Esophagus squamous epithelium (tissue), 5 donors: ENCODE measurements at regions of chr20 and their contacts with region 1.

Region 1: DNA sequence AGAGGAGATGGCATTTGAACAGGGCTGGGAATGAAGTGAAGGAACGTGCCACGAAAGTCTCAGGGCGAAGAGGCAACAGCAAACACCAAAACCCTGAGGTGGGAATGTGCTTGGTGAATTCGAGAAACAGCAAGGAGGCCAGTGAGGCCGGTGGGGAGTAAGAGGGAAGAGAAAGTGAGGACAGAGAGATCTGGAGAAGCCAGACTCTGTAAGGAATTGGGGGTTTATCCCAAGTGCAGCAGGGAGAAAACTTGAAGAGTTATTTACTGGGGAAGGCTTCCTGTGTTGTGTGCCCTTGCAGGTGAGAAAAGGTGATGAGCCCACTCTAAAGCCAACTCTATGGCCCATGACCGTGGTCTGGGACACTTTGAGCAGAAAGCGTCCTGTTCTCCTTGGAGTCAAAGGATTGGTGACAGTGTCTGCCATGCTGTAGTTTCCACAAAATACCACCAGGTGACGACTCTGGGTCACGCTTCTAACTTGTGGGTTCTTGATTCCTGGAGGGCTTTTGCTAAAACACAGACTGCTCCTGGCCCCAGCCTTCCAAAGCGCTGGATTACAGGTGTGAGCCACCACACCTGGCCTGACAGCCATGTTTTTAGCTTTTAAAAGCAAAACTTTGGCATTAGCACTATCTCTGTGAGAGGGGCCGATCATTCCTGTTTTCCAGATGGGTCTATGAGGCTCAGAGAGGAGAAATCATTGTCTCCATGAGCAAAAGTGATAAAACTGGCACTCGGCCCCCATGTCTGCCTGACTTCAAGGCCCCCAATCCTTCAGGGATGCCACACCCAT is 18.0 kb upstream of the CSNK2A1 start:
- DNase-seq: no peak
- H3K4me3 ChIP-seq: no peak overlapping the region
- H3K27ac ChIP-seq: no peak overlapping the region
- H3K4me1 ChIP-seq: peaks cover 0 to 6% (median 0%) of the 10 kb centered on the region in 3 donors
- H3K27me3 ChIP-seq: peaks cover 0 to 74% (median 0%) of the 10 kb centered on the region in 4 donors
- CTCF ChIP-seq: peak; percentile 63 to 96 (median 94)
- POLR2A ChIP-seq: no peak

Region 2: DNA sequence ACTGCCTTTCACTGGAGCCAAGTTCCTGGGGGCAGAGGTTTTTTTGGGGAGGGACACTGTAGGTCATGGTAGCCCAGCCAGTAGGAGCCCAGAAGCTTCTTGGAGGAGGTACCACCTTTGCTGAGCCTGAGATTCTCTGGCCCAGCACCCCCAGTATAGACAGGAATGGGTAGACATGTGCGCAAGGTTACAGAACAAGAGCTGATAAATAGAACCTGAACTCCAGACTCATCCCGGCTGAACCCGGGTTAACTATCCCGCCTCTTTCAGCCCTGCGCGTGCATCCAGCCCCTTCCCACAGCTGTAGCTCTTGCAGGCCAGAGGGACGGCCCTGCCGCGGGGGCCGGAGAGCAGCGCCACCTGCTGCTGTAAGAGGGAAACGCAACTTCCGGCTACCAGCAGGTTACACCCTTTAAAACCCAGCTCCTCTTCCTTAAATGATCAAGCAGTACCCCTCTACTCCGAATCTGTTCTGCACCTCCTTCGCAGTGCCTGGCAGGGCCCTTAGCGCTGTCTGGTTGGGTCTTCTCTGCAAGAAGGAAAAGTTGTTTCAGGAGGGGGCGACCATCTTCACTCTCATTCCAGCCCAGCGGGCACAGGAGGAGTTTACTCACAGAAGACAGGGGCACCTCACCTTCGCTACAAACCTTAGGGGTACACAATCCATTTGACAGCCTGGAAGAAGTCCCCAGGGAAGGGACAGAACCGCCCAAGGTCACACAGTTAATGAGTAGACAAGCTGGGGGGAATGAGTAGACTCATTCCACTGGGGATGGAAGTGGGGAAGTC is 83.9 kb after region 1 on chr20:
- intact Hi-C with region 1: loop called (anchors 2 kb)
- DNase-seq: no peak
- H3K4me3 ChIP-seq: no peak overlapping the region
- H3K27ac ChIP-seq: no peak overlapping the region
- H3K4me1 ChIP-seq: peaks cover 6 to 21% (median 7%) of the 10 kb centered on the region in 3 donors
- H3K27me3 ChIP-seq: peaks cover 0 to 22% (median 0%) of the 10 kb centered on the region in 4 donors
- CTCF ChIP-seq: peak; percentile 78 to 88 (median 84)
- POLR2A ChIP-seq: no peak

Region 3: GRCh38 chr20:733861-734260 is 172.2 kb after region 1 on chr20:
- intact Hi-C with region 1: loop called (anchors 5 kb)
- DNase-seq: no peak
- H3K4me3 ChIP-seq: no peak overlapping the region
- H3K27ac ChIP-seq: no peak overlapping the region
- H3K4me1 ChIP-seq: peaks cover 0 to 11% (median 0%) of the 10 kb centered on the region in 3 donors
- H3K27me3 ChIP-seq: peaks cover 0 to 33% (median under 1%) of the 10 kb centered on the region in 4 donors
- CTCF ChIP-seq: no peak
- POLR2A ChIP-seq: no peak

Region 4: GRCh38 chr20:1166948-1167720 is 605.5 kb after region 1 on chr20:
- intact Hi-C with region 1: no loop called
- DNase-seq: no peak
- H3K4me3 ChIP-seq: no peak overlapping the region
- H3K27ac ChIP-seq: no peak overlapping the region
- H3K4me1 ChIP-seq: no peaks in the 10 kb centered on the region
- H3K27me3 ChIP-seq: no peaks in the 10 kb centered on the region
- CTCF ChIP-seq: no peak
- POLR2A ChIP-seq: no peak